BJ (cell line): ENCODE measurements at regions of chr20 and their contacts with region 1.

Region 1: GRCh38 chr20:38434743-38435554 is at the start of gene SNHG17:
- DNase-seq: peak; percentile 39
- H3K4me3 ChIP-seq: peak within 1 kb of the TSS; percentile 86
- H3K27me3 ChIP-seq: no peaks in the 10 kb centered on the region
- CTCF ChIP-seq: peak; percentile 100
- polyA plus RNA-seq, gene SNHG17: 27.9 and 41.4 TPM in 2 replicates

Region 2: DNA sequence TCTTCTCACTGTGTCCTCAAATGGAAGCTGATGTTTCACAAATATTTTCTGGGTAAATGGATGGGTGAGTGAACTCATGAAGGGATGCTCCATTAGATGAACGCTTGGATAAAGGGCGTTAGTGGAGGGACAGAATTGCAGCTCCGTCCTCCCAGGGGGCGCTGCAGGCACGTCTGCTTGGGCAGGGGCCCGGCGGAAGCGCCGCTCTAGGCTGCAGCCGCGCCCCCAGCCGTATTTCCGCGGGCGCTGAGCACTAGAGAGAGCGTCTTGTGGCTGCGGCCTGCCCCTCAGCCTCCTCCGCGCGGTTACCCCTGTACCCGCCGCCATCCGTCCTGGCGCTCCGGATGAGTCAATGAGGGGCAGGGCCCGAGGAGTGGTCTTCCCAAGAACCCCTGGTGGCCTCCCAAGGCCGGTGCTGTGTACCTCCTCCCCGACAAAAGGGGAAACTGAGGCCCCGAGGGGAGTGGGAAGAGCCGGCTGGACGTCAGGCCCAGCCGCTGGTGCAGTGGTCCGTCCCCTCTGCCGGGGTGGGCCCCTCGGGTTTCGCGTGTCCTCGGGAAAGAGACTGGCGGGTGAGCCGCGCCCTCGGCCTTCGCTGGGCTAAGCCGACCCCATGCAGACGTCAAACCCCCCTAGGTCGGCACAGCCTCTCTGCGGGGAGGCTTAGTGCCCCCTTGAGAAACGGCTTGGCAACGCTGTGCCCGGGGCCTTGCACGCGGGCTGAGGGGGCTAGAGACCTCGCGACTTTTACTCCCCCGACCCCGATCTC is 11.7 kb after region 1 on chr20:
- CTCF ChIA-PET with region 1: interaction called, 58 read pairs
- POLR2A ChIA-PET with region 1: interaction called, 8 read pairs
- DNase-seq: peak; percentile 32
- H3K4me3 ChIP-seq: peak overlapping the region; percentile 79
- H3K27me3 ChIP-seq: peaks cover 1% of the 10 kb centered on the region; the same call in 1 of the 2 replicates
- CTCF ChIP-seq: peak; percentile 95